ENCODE measurements at regions of chr4 and their contacts with region 1.

Region 1: GRCh38 chr4:183840311-183840710 is 64.8 kb upstream of the STOX2 start:
- DNase-seq: peak; percentile 81
- H3K4me3 Mint-ChIP-seq: no peak overlapping the region
- H3K27ac Mint-ChIP-seq: no peak overlapping the region
- H3K4me1 Mint-ChIP-seq: no peaks in the 10 kb centered on the region
- H3K27me3 Mint-ChIP-seq: peaks cover 12% of the 10 kb centered on the region

Region 2: DNA sequence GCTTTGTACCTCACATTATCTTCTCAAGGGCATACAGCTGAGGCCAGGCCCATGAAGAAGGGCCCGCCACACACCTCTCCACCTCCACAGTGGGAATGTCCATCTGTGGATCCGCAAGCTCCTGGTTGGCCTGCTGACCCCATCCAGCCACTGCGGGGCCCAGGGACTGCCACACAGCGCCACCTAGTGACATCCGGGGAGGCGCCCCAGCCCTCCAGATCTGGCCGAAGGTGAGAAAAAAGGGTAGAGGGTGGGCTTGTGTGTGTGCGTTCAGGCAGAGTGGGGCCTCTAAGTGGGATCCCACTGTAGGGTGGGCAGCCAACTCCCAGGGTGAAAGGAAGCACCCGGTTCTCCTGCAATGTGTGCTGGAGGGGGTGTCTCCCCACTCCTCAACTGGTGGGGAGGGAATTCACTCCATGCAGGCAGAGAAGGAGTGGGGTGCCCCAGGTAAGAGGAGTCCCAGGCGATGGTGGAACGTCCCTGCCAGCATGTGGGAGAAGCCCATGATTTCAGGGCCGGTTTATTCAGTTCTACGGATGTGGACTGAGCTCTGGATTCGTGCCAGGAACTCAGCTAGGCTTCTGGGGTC is 260.1 kb after region 1 on chr4:
- CTCF ChIA-PET with region 1: interaction called, 5 read pairs
- intact Hi-C with region 1: loop called (anchors 1 kb)
- DNase-seq: peak; percentile 49
- H3K4me3 Mint-ChIP-seq: no peak overlapping the region
- H3K27ac Mint-ChIP-seq: no peak overlapping the region
- H3K4me1 Mint-ChIP-seq: no peaks in the 10 kb centered on the region
- H3K27me3 Mint-ChIP-seq: peaks cover 13% of the 10 kb centered on the region